ENCODE measurements at regions of chr1 and their contacts with region 1.

Region 1: GRCh38 chr1:168676029-168676812 is 52.8 kb downstream of the DPT start:
- DNase-seq: no peak
- ATAC-seq: no peak

Region 2: DNA sequence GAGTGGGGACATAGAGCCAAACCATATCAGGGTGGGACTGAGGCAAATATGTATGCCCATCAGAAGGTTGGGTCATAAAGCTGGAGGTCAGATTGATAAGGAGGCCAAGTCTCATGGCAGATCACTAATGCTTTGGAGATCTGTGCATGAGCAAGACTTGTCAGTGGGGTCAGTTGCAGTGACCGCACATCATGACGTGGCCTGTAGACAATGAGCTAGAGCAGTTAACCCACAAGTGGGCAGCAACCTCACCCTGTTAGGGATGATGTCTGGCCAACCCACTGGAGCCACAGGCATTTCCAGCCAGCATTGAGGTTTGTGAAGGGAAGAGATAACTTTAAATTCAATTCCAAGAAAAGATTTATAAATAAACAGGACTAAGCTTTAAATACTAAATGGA is 33.1 kb before region 1 on chr1:
- intact Hi-C with region 1: loop called in 1 of 2 experiments (anchors 5 kb)
- DNase-seq: no peak
- ATAC-seq: no peak

Measured in left cardiac atrium (tissue), 4 donors.